Activated CD8-positive, alpha-beta T cell treated with anti-CD3 and anti-CD28 coated beads, Interleukin-2, amount 10 ng/mL, durations not matched to agents 7 days and 5 days (primary cell): ENCODE measurements at regions of chr10 and their contacts with region 1.

Region 1: DNA sequence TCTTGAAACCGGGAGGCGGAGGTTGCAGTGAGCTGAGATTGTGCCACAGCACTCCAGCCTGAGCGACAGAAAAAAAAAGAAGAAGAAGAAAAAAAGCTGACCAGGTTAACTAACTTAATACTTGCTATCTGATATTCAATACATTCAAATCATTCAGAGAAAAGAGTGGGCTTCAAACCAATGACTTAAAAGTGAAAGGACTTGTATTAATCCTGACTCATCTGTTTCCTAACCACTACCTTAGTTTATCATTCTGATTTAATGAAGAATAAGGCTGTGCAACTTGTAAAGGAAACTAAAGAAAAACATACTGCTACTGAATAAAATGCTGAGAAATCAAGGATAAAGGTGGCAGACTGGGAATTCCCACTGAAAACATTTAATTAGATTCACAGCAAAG is 128.4 kb downstream of the NRBF2 start:
- DNase-seq: no peak
- ATAC-seq: no peak
- H3K4me3 Mint-ChIP-seq: peak overlapping the region; percentile 31
- H3K27ac Mint-ChIP-seq: peak overlapping the region; percentile 52
- H3K4me1 Mint-ChIP-seq: peaks cover 57% of the 10 kb centered on the region
- H3K27me3 Mint-ChIP-seq: no peaks in the 10 kb centered on the region

Region 2: GRCh38 chr10:63227207-63227915 is 34.1 kb before region 1 on chr10:
- CTCF ChIA-PET with region 1: interaction called, 23 read pairs
- POLR2A ChIA-PET with region 1: interaction called, 6 read pairs
- DNase-seq: no peak
- ATAC-seq: peak; percentile 49
- H3K4me3 Mint-ChIP-seq: peak overlapping the region; percentile 42
- H3K27ac Mint-ChIP-seq: peak overlapping the region; percentile 82
- H3K4me1 Mint-ChIP-seq: peaks cover 47% of the 10 kb centered on the region
- H3K27me3 Mint-ChIP-seq: no peaks in the 10 kb centered on the region